PC-9 (cell line): ENCODE measurements at regions of chr6 and their contacts with region 1.

Region 1: DNA sequence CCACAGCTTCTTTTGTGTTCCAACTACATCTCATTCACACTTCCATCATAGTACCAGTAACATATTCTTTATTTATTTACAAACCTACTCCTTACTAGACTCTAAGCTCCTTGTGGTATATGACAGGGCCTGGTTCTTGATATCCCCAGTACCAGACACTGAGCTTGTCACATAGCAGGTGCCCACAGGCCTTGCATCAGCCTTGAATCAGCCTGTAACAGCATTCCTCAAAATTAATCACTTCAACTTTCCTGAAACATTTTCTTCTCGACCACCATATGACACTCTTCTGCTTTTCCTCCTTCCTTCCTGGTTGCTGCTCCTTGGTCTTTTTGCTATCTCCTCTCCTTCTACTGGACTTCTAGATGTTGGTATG is 24.7 kb upstream of the SRPK1 start:
- DNase-seq: no peak
- H3K4me3 ChIP-seq: no peak overlapping the region
- H3K27ac ChIP-seq: no peak overlapping the region
- H3K4me1 ChIP-seq: peaks cover 10% of the 10 kb centered on the region
- H3K27me3 ChIP-seq: no peaks in the 10 kb centered on the region
- CTCF ChIP-seq: no peak

Region 2: DNA sequence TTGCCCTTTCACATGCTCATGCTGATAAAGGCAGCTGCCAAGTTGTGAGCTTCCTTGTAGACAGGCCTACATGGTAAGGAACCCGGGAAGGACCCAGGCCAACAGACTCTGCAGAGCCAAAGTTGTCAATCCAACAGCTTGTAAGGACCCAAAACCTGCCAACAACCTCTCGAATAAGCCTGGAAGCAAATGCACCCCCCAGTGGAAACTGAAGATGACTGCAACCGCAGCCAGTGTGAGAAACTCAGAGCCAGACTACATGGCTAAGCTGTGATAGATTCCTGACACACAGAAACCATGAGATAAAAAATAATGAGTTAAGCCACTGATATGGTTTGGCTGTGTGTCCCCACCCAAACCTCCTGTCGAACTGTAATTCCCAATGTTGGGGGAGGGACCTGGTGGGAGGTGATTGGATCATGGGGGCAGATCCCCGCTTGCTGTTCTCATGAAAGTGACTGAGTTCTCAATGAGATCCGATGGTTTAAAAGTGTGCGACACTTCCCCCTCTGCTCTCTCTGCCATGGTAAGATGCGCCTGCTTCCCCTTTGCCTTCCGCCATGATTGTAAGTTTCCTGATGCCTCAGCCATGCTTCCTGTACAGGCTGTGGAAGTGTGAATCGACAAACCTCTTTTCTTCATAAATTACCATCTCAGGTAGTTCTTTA is 188.0 kb before region 1 on chr6:
- CTCF ChIA-PET with region 1: no interaction called
- POLR2A ChIA-PET with region 1: no interaction called
- intact Hi-C with region 1: no loop called
- DNase-seq: no peak
- H3K4me3 ChIP-seq: no peak overlapping the region
- H3K27ac ChIP-seq: no peak overlapping the region
- H3K4me1 ChIP-seq: peaks cover 13% of the 10 kb centered on the region
- H3K27me3 ChIP-seq: no peaks in the 10 kb centered on the region
- CTCF ChIP-seq: peak; percentile 48; the same call in 1 of the 2 replicates

Region 3: GRCh38 chr6:35829306-35829705 is 116.3 kb before region 1 on chr6:
- CTCF ChIA-PET with region 1: no interaction called
- POLR2A ChIA-PET with region 1: interaction called, 31 read pairs
- intact Hi-C with region 1: no loop called
- DNase-seq: no peak
- H3K4me3 ChIP-seq: no peak overlapping the region
- H3K27ac ChIP-seq: no peak overlapping the region
- H3K4me1 ChIP-seq: peaks cover 36% of the 10 kb centered on the region
- H3K27me3 ChIP-seq: no peaks in the 10 kb centered on the region
- CTCF ChIP-seq: no peak

Region 4: DNA sequence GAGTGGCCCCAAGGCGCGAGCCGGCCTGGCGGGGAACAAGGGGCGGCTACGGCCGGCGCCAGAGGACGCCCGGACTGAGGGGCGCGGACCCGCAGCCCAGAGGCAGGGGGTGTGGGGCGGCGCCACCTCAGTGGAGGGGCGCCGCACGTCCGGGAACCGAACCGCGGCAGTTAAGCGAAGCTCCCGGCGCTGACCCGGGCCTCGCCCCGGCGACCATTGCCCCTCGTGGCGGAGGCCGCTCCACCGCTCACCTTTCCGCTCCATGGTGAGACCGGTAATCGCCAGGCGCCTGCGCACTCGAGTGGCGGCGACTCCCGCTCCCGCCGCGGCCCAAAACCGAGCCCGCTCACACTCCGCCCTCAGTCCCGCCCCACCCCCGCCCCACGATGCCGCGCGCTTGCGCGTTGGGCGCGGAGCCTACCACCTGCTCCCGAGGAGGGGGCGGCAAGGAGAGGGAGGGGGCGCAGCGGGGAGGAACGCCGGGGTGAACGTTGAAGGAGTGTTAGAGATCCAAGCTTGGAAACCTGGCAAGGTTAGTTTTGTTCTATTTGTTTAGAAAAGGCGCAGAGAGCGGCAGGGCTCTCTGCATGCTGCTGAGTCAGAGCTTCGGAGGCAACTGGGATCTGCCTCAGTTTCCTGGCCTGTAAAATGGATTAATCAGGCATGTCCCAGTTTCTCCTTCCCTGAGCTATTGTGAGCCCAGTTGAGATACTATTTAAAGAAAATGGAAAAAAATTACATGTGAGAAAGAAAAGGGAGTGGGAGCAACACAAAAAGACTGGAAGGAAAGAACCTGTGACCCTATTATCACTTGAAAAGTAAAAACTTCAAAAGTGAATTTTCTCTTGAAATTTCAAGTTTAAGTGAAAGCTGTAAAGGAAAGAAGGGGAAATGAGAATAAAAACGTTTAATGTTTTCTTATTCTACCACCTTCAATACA is 24.6 kb before region 1 on chr6 and contains the start of gene SRPK1:
- CTCF ChIA-PET with region 1: no interaction called
- POLR2A ChIA-PET with region 1: interaction called, 11 read pairs
- intact Hi-C with region 1: no loop called
- DNase-seq: peak; percentile 69 to 87
- H3K4me3 ChIP-seq: peak within 1 kb of the TSS; percentile 97
- H3K27ac ChIP-seq: peak within 1 kb of the TSS; percentile 74
- H3K4me1 ChIP-seq: peaks cover 29% of the 10 kb centered on the region
- H3K27me3 ChIP-seq: no peaks in the 10 kb centered on the region
- CTCF ChIP-seq: no peak
- total RNA-seq, gene SRPK1: 79.0 and 98.7 TPM in 2 replicates

Region 5: GRCh38 chr6:37182736-37183590 is 1237.3 kb after region 1 on chr6:
- CTCF ChIA-PET with region 1: no interaction called
- POLR2A ChIA-PET with region 1: no interaction called
- intact Hi-C with region 1: no loop called
- DNase-seq: no peak
- H3K4me3 ChIP-seq: no peak overlapping the region
- H3K27ac ChIP-seq: no peak overlapping the region
- H3K4me1 ChIP-seq: no peaks in the 10 kb centered on the region
- H3K27me3 ChIP-seq: no peaks in the 10 kb centered on the region
- CTCF ChIP-seq: no peak